K562 (cell line): ENCODE measurements at regions of chr5 and their contacts with region 1.

Region 1: GRCh38 chr5:179623003-179623880 is at the start of gene HNRNPH1:
- DNase-seq: peak; percentile 96 to 99 (median 98)
- ATAC-seq: peak; percentile 79
- H3K4me3 ChIP-seq: peak within 1 kb of the TSS; percentile 95
- H3K27ac ChIP-seq: peak within 1 kb of the TSS; percentile 99
- H3K4me1 ChIP-seq: peaks cover 20 to 35% of the 10 kb centered on the region in 2 experiments
- H3K27me3 ChIP-seq: no peaks in the 10 kb centered on the region
- CTCF ChIP-seq: no peak
- EP300 ChIP-seq: no peak
- POLR2A ChIP-seq: peak; percentile 100
- RAD21 ChIP-seq: no peak
- polyA plus RNA-seq, gene HNRNPH1: 103 to 128 TPM

Region 2: DNA sequence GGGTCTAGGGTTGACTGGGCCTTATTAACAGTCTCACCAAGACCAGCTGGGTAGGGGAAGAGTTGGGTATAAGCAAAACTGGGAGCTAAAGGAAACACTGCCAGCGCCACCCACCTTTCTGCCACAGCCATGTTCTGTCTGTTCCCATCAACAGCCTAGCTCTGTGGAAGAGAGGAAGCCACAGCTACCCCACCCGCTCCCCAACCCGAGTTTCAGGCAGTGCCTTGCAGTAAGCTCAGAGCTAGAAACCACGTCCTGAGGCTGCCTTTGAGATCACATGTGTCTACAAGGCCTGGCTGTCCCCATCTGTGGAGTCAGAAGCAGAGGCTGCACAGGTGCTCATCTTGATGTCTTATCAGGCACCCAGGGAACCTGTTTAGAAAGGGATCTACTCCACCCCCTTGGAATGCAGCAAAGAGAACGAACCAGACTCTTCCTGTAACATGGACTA is 15.1 kb before region 1 on chr5:
- CTCF ChIA-PET with region 1: no interaction called
- POLR2A ChIA-PET with region 1: interaction called, 181 read pairs
- in situ Hi-C with region 1: no loop called
- intact Hi-C with region 1: no loop called
- DNase-seq: peak in 1 of 4 experiments; percentile 9
- ATAC-seq: peak; percentile 4
- H3K4me3 ChIP-seq: no peak overlapping the region
- H3K27ac ChIP-seq: no peak overlapping the region
- H3K4me1 ChIP-seq: peaks cover 10 to 25% of the 10 kb centered on the region in 2 experiments; a peak in 4 of 5 replicates
- H3K27me3 ChIP-seq: no peaks in the 10 kb centered on the region
- CTCF ChIP-seq: no peak
- EP300 ChIP-seq: no peak
- POLR2A ChIP-seq: peak; percentile 22; the same call in 1 of the 2 replicates
- RAD21 ChIP-seq: no peak

Region 3: GRCh38 chr5:179680780-179681401 is 57.6 kb after region 1 on chr5 and contains the start of gene CBY3:
- CTCF ChIA-PET with region 1: no interaction called
- POLR2A ChIA-PET with region 1: interaction called, 18 read pairs
- in situ Hi-C with region 1: no loop called
- intact Hi-C with region 1: no loop called
- DNase-seq: peak in 1 of 4 experiments; percentile 28
- ATAC-seq: no peak
- H3K4me3 ChIP-seq: no peak within 1 kb of the TSS
- H3K27ac ChIP-seq: no peak within 1 kb of the TSS; the same call in 2 of the 3 replicates
- H3K4me1 ChIP-seq: peaks cover 9 to 30% of the 10 kb centered on the region in 2 experiments; a peak in 4 of 5 replicates
- H3K27me3 ChIP-seq: no peaks in the 10 kb centered on the region
- CTCF ChIP-seq: no peak
- EP300 ChIP-seq: no peak
- POLR2A ChIP-seq: no peak
- RAD21 ChIP-seq: no peak
- polyA plus RNA-seq, gene CBY3: not detected

Region 4: GRCh38 chr5:179806250-179807222 is 183.3 kb after region 1 on chr5 and contains the start of gene MGAT4B:
- CTCF ChIA-PET with region 1: no interaction called
- POLR2A ChIA-PET with region 1: interaction called, 12 read pairs
- in situ Hi-C with region 1: no loop called
- intact Hi-C with region 1: no loop called
- DNase-seq: peak; percentile 80 to 91 (median 84)
- ATAC-seq: peak; percentile 82
- H3K4me3 ChIP-seq: peak within 1 kb of the TSS; percentile 76
- H3K27ac ChIP-seq: peak within 1 kb of the TSS; percentile 88
- H3K4me1 ChIP-seq: peaks cover 23 to 61% of the 10 kb centered on the region in 2 experiments
- H3K27me3 ChIP-seq: no peaks in the 10 kb centered on the region
- CTCF ChIP-seq: no peak
- EP300 ChIP-seq: no peak
- POLR2A ChIP-seq: no peak
- RAD21 ChIP-seq: no peak
- polyA plus RNA-seq, gene MGAT4B: 0.34 to 0.37 TPM

Region 5: DNA sequence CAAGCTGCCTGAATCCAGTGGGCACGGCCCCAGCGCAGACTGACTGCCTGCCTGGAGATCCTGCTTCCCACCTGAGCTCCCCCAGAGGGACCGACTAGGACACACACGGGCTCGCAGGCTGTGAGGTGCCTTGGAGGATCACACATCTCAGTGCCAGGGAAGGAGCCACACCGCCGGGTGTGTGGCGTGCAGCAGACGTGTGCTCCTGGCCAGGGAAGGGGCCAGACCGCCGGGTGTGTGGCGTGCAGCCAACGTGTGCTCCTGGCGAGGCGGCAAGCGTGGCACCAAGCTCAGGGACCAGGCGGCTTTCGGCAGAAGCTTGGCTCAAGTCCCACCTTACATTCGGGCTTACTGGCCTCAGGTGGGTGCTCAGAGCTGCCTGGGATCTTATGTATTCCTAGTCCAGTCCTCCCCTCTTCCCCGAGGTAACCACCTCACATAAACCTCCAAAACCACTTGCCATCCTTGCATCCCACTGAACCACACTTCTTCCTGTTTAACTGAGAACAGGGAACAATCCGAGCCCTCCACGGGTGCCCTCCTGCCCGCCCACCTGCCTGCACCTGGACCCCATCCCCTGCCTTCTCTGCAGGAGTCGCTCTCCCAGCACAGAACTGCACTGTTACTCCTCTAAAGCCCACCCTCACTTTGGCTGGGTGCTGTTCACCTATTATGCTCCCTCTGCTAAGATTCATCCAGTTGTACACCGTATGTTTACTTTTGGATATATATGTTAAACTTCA is 257.8 kb after region 1 on chr5:
- CTCF ChIA-PET with region 1: no interaction called
- POLR2A ChIA-PET with region 1: no interaction called
- in situ Hi-C with region 1: no loop called
- intact Hi-C with region 1: no loop called
- DNase-seq: no peak
- ATAC-seq: no peak
- H3K4me3 ChIP-seq: no peak overlapping the region
- H3K27ac ChIP-seq: no peak overlapping the region
- H3K4me1 ChIP-seq: no peaks in the 10 kb centered on the region
- H3K27me3 ChIP-seq: no peaks in the 10 kb centered on the region
- CTCF ChIP-seq: no peak
- EP300 ChIP-seq: no peak
- POLR2A ChIP-seq: no peak
- RAD21 ChIP-seq: no peak

Region 6: GRCh38 chr5:180018347-180019060 is 395.3 kb after region 1 on chr5:
- CTCF ChIA-PET with region 1: no interaction called
- POLR2A ChIA-PET with region 1: no interaction called
- in situ Hi-C with region 1: no loop called
- intact Hi-C with region 1: no loop called
- DNase-seq: no peak
- ATAC-seq: no peak
- H3K4me3 ChIP-seq: no peak overlapping the region
- H3K27ac ChIP-seq: no peak overlapping the region
- H3K4me1 ChIP-seq: no peaks in the 10 kb centered on the region; a peak in 1 of 5 replicates
- H3K27me3 ChIP-seq: no peaks in the 10 kb centered on the region
- CTCF ChIP-seq: no peak
- EP300 ChIP-seq: no peak
- POLR2A ChIP-seq: no peak
- RAD21 ChIP-seq: no peak

Region 7: GRCh38 chr5:180769821-180770220 is 1146.6 kb after region 1 on chr5:
- CTCF ChIA-PET with region 1: no interaction called
- POLR2A ChIA-PET with region 1: no interaction called
- in situ Hi-C with region 1: no loop called
- intact Hi-C with region 1: no loop called
- DNase-seq: no peak
- ATAC-seq: no peak
- H3K4me3 ChIP-seq: no peak overlapping the region
- H3K27ac ChIP-seq: no peak overlapping the region
- H3K4me1 ChIP-seq: no peaks in the 10 kb centered on the region
- H3K27me3 ChIP-seq: no peaks in the 10 kb centered on the region
- CTCF ChIP-seq: no peak
- EP300 ChIP-seq: no peak
- POLR2A ChIP-seq: no peak
- RAD21 ChIP-seq: no peak